ENCODE measurements at regions of chr15 and their contacts with region 1.

Region 1: GRCh38 chr15:86347245-86347644 is 267.6 kb downstream of the AGBL1 start:
- DNase-seq: no peak
- H3K4me3 ChIP-seq: no peak overlapping the region
- H3K27ac ChIP-seq: no peak overlapping the region
- H3K4me1 ChIP-seq: no peaks in the 10 kb centered on the region
- H3K27me3 ChIP-seq: no peaks in the 10 kb centered on the region
- CTCF ChIP-seq: no peak

Region 2: GRCh38 chr15:86403914-86404583 is 56.8 kb after region 1 on chr15:
- intact Hi-C with region 1: loop called (anchors 10 kb)
- DNase-seq: no peak
- H3K4me3 ChIP-seq: no peak overlapping the region
- H3K27ac ChIP-seq: no peak overlapping the region
- H3K4me1 ChIP-seq: no peaks in the 10 kb centered on the region
- H3K27me3 ChIP-seq: no peaks in the 10 kb centered on the region
- CTCF ChIP-seq: no peak

Measured in ascending aorta (tissue), 2 donors.